ENCODE measurements at regions of chr11 and their contacts with region 1.

Region 1: GRCh38 chr11:7892840-7893254 is 38.2 kb downstream of the OR10A6 start:
- DNase-seq: no peak
- H3K4me3 ChIP-seq: no peak overlapping the region
- H3K27ac ChIP-seq: no peak overlapping the region
- H3K4me1 ChIP-seq: no peaks in the 10 kb centered on the region
- H3K27me3 ChIP-seq: no peaks in the 10 kb centered on the region
- CTCF ChIP-seq: peak in 3 of 4 experiments; percentile 26 to 67 (median 51)
- EP300 ChIP-seq: no peak
- POLR2A ChIP-seq: no peak

Region 2: DNA sequence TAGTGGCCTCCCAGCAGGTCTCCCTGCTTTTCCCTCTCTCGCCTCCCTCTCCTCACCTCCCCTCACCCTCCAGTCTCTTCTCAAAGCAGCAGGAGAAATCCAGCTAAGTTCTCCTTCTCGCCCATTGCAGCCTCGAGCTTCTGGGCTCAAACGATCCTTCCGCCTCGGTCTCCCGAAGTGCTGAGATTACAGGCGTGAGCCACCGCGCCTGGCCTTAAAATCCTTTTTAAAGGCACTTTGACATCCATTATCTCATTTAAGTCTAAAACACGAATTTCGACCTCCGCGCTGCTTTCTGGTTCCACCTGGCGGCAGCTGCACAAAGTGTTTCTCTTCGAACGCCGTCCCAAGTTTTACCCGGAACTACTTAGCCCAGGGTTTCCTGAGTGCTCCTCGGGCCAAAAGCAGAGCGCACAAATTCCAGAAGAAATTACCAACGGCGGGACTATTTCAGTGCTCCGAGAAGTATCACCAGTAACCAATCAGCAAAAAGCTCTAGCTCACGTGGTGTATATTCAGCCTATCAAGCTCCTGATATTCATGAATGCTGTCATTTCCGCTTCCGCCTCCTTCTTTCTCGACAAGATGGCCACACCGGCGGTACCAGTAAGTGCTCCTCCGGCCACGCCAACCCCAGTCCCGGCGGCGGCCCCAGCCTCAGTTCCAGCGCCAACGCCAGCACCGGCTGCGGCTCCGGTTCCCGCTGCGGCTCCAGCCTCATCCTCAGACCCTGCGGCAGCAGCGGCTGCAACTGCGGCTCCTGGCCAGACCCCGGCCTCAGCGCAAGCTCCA is 94.1 kb after region 1 on chr11 and contains the start of gene EIF3F:
- intact Hi-C with region 1: loop called (anchors 1 kb)
- DNase-seq: peak; percentile 97
- H3K4me3 ChIP-seq: peak within 1 kb of the TSS; percentile 68 to 89 (median 80)
- H3K27ac ChIP-seq: peak within 1 kb of the TSS; percentile 76 to 83 (median 80)
- H3K4me1 ChIP-seq: peaks cover 0 to 36% (median 23%) of the 10 kb centered on the region in 4 donors
- H3K27me3 ChIP-seq: no peaks in the 10 kb centered on the region
- CTCF ChIP-seq: peak; percentile 81 to 92 (median 85)
- EP300 ChIP-seq: no peak
- POLR2A ChIP-seq: peak in 1 of 2 donors; percentile 10
- total RNA-seq, gene EIF3F: 210 to 233 (median 224) TPM

Region 3: GRCh38 chr11:8099291-8099899 is 206.5 kb after region 1 on chr11:
- intact Hi-C with region 1: loop called (anchors 5 kb)
- DNase-seq: peak; percentile 85
- H3K4me3 ChIP-seq: no peak overlapping the region
- H3K27ac ChIP-seq: no peak overlapping the region
- H3K4me1 ChIP-seq: no peaks in the 10 kb centered on the region
- H3K27me3 ChIP-seq: no peaks in the 10 kb centered on the region
- CTCF ChIP-seq: peak; percentile 30 to 79 (median 68)
- EP300 ChIP-seq: no peak
- POLR2A ChIP-seq: no peak

Measured in sigmoid colon (tissue), 7 donors.